Heart left ventricle (tissue), 16 donors: ENCODE measurements at regions of chr1 and their contacts with region 1.

Region 1: DNA sequence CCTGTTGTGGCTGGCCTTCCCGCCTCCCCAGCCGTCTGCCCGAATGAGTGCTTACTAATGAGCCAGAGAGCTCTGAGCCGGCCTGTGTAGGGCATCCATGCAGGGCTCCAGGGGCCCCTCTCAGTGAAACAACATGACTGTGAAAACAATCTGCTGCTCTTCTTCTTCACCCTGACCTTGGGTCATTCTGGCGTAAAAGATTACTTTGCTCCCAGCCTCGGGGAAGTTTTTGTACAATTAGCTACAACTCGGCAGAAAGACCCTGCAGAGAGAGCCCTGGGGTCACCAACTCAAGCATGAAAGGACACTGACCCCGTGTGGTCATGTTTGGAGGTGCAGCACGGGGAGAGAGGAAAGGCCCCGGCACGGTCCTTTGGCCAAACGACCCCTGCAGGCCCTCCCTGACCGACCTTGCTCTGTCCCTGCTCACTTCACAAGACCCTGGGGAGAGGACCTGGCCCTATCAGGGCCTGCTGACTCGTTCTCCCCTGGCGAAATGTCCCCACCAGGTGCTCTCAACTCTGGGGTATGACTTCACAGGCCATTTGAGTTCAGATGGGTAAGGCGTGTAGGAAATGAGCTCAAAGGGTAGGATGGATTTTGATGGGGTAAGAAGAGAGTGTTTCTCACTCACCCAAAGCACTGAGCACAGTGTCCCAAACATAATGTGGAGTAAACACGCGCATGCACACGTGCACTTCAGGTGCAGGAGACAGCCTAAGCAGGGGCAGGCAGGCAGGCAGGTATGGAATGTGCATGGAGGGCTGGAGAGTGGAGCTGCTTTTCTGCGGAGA is 22.9 kb upstream of the FAM20B start:
- DNase-seq: peak; percentile 62 to 87 (median 71)
- ATAC-seq: peak; percentile 60 to 92 (median 84)
- H3K4me3 ChIP-seq: peak overlapping the region in 1 of 12 donors; percentile 4
- H3K27ac ChIP-seq: no peak overlapping the region
- H3K4me1 ChIP-seq: peaks cover 0 to 8% (median 0%) of the 10 kb centered on the region in 12 donors
- H3K27me3 ChIP-seq: no peaks in the 10 kb centered on the region
- CTCF ChIP-seq: peak; percentile 91 to 98 (median 94)
- POLR2A ChIP-seq: peak in 1 of 2 donors; percentile 21

Region 2: GRCh38 chr1:178310685-178311105 is 692.1 kb before region 1 on chr1:
- intact Hi-C with region 1: loop called in 2 of 10 experiments (anchors 5 to 10 kb)
- DNase-seq: no peak
- ATAC-seq: peak; percentile 78 to 86 (median 82)
- H3K4me3 ChIP-seq: no peak overlapping the region
- H3K27ac ChIP-seq: peak overlapping the region in 1 of 12 donors; percentile 45
- H3K4me1 ChIP-seq: peaks cover 0 to 25% (median 8%) of the 10 kb centered on the region in 12 donors
- H3K27me3 ChIP-seq: no peaks in the 10 kb centered on the region
- CTCF ChIP-seq: peak; percentile 61 to 84 (median 78)
- POLR2A ChIP-seq: no peak

Region 3: GRCh38 chr1:178542560-178543356 is 460.0 kb before region 1 on chr1:
- intact Hi-C with region 1: loop called in 8 of 10 experiments (anchors 2 to 5 kb)
- DNase-seq: peak; percentile 86 to 95 (median 88)
- ATAC-seq: peak; percentile 83 to 94 (median 93)
- H3K4me3 ChIP-seq: peak overlapping the region; percentile 62 to 86 (median 76)
- H3K27ac ChIP-seq: peak overlapping the region; percentile 51 to 90 (median 84)
- H3K4me1 ChIP-seq: peaks cover 0 to 25% (median 10%) of the 10 kb centered on the region in 12 donors
- H3K27me3 ChIP-seq: no peaks in the 10 kb centered on the region
- CTCF ChIP-seq: peak; percentile 92 to 100 (median 98)
- POLR2A ChIP-seq: no peak

Region 4: GRCh38 chr1:178774263-178774662 is 228.5 kb before region 1 on chr1:
- intact Hi-C with region 1: loop called (anchors 2 to 5 kb)
- DNase-seq: no peak
- ATAC-seq: no peak
- H3K4me3 ChIP-seq: no peak overlapping the region
- H3K27ac ChIP-seq: no peak overlapping the region
- H3K4me1 ChIP-seq: no peaks in the 10 kb centered on the region
- H3K27me3 ChIP-seq: no peaks in the 10 kb centered on the region
- CTCF ChIP-seq: peak; percentile 22 to 65 (median 49)
- POLR2A ChIP-seq: no peak

Region 5: DNA sequence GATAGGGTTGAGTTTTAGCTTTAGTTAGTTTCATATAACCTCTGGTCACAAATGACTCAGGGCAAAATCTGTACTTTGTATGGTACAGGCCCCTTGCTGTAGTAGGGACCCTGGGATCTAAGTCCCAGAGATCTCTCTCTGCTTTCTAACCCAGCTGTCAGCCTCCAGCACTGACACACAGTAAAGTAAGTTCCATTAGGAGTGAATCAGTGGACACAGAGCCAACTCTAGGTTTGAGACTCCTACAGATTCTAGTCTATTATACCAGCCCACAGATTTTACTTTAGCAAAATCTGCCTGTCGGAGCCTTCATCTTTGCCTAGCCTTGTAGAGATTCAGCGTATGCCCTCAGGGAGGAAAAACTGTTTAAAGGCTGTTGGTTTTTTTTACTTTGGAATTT is 184.3 kb before region 1 on chr1:
- intact Hi-C with region 1: loop called in 8 of 10 experiments (anchors 2 to 10 kb)
- DNase-seq: no peak
- ATAC-seq: no peak
- H3K4me3 ChIP-seq: no peak overlapping the region
- H3K27ac ChIP-seq: no peak overlapping the region
- H3K4me1 ChIP-seq: peaks cover 0 to 6% (median 0%) of the 10 kb centered on the region in 12 donors
- H3K27me3 ChIP-seq: no peaks in the 10 kb centered on the region
- CTCF ChIP-seq: no peak
- POLR2A ChIP-seq: no peak

Region 6: GRCh38 chr1:178885869-178886268 is 116.9 kb before region 1 on chr1:
- intact Hi-C with region 1: loop called in 1 of 10 experiments (anchors 10 kb)
- DNase-seq: no peak
- ATAC-seq: no peak
- H3K4me3 ChIP-seq: no peak overlapping the region
- H3K27ac ChIP-seq: no peak overlapping the region
- H3K4me1 ChIP-seq: no peaks in the 10 kb centered on the region
- H3K27me3 ChIP-seq: no peaks in the 10 kb centered on the region
- CTCF ChIP-seq: no peak
- POLR2A ChIP-seq: no peak